ENCODE measurements at regions of chr1 and their contacts with region 1.

Region 1: GRCh38 chr1:89762779-89763648 is 57.8 kb upstream of the LRRC8D start:
- DNase-seq: peak; percentile 95
- H3K4me3 ChIP-seq: peak overlapping the region; percentile 5 to 34 (median 33)
- H3K27ac ChIP-seq: peak overlapping the region; percentile 52
- H3K4me1 ChIP-seq: peaks cover 46% of the 10 kb centered on the region
- H3K27me3 ChIP-seq: no peaks in the 10 kb centered on the region
- CTCF ChIP-seq: peak; percentile 98
- POLR2A ChIP-seq: peak; percentile 58

Region 2: GRCh38 chr1:89407360-89407759 is 355.7 kb before region 1 on chr1:
- CTCF ChIA-PET with region 1: no interaction called
- POLR2A ChIA-PET with region 1: no interaction called
- dilution Hi-C with region 1: no loop called
- intact Hi-C with region 1: no loop called
- DNase-seq: no peak
- H3K4me3 ChIP-seq: no peak overlapping the region
- H3K27ac ChIP-seq: no peak overlapping the region
- H3K4me1 ChIP-seq: no peaks in the 10 kb centered on the region
- H3K27me3 ChIP-seq: no peaks in the 10 kb centered on the region
- CTCF ChIP-seq: no peak
- POLR2A ChIP-seq: no peak

Region 3: DNA sequence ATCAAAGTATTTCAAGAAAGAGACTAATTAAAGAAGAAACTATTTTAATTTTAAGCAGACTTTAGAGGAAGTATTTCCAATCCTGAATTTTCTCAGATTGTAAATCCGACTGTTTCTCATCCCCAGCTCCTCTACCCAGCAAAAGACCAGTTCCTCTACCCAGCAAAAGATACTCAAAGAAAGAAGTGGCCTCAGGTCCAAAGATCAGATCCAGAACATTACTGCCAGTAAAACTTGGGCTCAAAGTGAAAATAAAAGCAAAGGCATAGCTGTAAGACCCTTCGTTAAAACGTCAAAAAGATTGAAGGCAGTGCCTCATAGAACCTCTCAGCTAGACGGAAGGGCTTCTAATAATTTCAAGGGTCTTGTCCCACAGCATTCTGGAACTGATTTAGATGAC is 188.4 kb before region 1 on chr1:
- CTCF ChIA-PET with region 1: no interaction called
- POLR2A ChIA-PET with region 1: no interaction called
- dilution Hi-C with region 1: no loop called
- intact Hi-C with region 1: no loop called
- DNase-seq: no peak
- H3K4me3 ChIP-seq: no peak overlapping the region
- H3K27ac ChIP-seq: no peak overlapping the region
- H3K4me1 ChIP-seq: no peaks in the 10 kb centered on the region
- H3K27me3 ChIP-seq: no peaks in the 10 kb centered on the region
- CTCF ChIP-seq: no peak
- POLR2A ChIP-seq: no peak

Region 4: DNA sequence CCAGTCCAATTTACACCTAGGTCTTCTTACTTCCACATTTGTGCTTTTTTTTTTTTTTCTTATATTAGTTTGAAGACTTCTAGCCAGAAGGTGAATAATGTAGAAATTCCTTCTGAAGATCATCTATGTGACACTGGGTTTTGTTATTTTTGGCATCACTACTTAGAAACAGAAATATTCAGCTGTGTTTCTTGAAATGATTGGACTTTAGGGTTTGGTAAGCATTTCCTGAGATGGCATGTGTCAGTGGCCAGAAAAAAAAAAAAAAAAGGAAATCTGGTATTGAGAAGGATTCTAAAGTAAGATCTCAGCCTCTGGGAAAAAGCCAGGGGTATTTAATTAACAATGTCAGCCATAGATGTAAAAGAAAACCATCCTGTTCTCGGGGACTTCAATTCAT is 173.5 kb before region 1 on chr1:
- CTCF ChIA-PET with region 1: interaction called, 10 read pairs
- POLR2A ChIA-PET with region 1: no interaction called
- dilution Hi-C with region 1: no loop called
- intact Hi-C with region 1: no loop called
- DNase-seq: peak; percentile 48
- H3K4me3 ChIP-seq: no peak overlapping the region
- H3K27ac ChIP-seq: no peak overlapping the region
- H3K4me1 ChIP-seq: peaks cover 8% of the 10 kb centered on the region
- H3K27me3 ChIP-seq: no peaks in the 10 kb centered on the region
- CTCF ChIP-seq: no peak
- POLR2A ChIP-seq: no peak

Region 5: DNA sequence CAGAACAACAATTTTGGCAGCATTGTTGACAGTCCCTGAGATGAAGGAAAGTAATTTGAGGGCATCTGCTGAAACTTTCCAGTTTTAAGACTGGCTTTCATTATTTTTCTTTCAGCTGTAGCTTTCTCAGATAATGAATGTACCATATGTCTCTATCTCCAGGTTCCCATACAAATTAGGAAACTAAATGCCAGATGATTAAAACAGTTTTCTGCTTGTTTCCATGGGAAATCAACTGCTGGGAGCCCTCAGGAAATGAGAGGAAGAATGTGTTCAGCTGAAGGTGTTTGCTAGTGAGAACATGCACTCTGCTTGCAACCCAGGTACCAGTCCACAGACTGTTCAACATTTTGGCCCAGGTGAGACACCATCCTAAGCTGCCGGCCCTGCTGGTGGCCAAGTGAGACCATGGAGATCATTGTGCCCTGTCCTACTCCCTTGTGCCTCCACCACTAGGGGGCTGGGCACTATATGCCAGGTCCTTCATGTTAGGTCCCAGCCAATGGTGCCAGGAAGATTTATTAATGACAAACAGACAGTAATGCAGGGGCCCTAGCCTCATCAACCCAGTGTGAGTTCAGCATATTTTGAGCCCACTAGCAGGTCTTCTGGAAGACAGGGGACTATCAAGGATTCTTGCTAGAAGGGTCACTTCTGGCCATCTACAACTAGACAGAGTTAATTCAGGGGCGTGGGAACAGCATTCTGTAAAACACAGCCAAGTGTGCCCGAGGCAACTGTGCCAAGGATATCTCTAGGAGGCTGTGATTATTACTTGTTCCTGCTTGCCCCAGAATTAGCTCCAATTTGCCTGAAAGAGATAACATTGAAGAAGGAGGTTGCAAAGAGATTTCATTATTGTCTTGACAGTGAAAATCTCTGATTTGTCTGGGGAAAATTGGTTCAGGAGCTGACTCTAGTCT is 147.1 kb before region 1 on chr1:
- CTCF ChIA-PET with region 1: interaction called, 25 read pairs
- POLR2A ChIA-PET with region 1: interaction called, 4 read pairs
- dilution Hi-C with region 1: no loop called
- intact Hi-C with region 1: no loop called
- DNase-seq: peak; percentile 25
- H3K4me3 ChIP-seq: no peak overlapping the region
- H3K27ac ChIP-seq: no peak overlapping the region
- H3K4me1 ChIP-seq: no peaks in the 10 kb centered on the region
- H3K27me3 ChIP-seq: no peaks in the 10 kb centered on the region
- CTCF ChIP-seq: peak; percentile 36 to 61
- POLR2A ChIP-seq: no peak

Region 6: GRCh38 chr1:89670163-89670562 is 92.9 kb before region 1 on chr1:
- CTCF ChIA-PET with region 1: interaction called, 11 read pairs
- POLR2A ChIA-PET with region 1: no interaction called
- dilution Hi-C with region 1: no loop called
- intact Hi-C with region 1: no loop called
- DNase-seq: peak; percentile 27
- H3K4me3 ChIP-seq: no peak overlapping the region
- H3K27ac ChIP-seq: no peak overlapping the region
- H3K4me1 ChIP-seq: peaks cover 51% of the 10 kb centered on the region
- H3K27me3 ChIP-seq: no peaks in the 10 kb centered on the region
- CTCF ChIP-seq: no peak
- POLR2A ChIP-seq: no peak

Region 7: DNA sequence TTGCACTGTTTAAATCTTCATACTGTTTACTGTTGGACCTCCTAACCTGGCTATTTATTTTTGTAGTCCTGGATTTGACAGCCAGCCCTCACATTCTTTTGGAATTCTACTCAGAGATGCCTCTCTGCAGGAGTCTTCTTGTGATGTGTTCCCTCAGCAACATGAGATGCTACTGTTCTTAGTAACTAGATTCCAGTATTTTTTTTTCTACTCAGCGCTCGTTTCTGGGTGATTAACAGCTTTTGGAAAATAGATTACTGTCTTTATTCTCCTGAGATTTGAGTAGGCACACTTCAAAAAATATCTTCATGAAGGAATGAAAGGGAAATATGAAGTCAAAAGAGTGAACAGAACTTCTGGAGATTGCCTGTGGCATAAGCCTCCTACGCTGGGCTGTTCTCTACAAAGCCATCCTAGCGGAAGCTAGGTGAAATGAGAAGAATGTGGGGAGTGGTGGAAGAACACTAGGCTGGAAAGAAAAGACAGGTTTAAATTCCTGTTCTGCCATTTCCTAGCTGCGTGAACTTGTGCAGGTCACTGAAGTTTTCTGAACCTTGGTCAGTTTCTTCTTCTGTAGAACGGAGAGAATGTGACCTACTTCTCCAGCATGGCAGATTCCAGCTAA is 54.2 kb before region 1 on chr1:
- CTCF ChIA-PET with region 1: interaction called, 10 read pairs
- POLR2A ChIA-PET with region 1: no interaction called
- dilution Hi-C with region 1: no loop called
- intact Hi-C with region 1: loop called (anchors 1 kb)
- DNase-seq: no peak
- H3K4me3 ChIP-seq: no peak overlapping the region
- H3K27ac ChIP-seq: peak overlapping the region; percentile 97
- H3K4me1 ChIP-seq: peaks cover 43% of the 10 kb centered on the region
- H3K27me3 ChIP-seq: no peaks in the 10 kb centered on the region
- CTCF ChIP-seq: no peak
- POLR2A ChIP-seq: no peak

Region 8: GRCh38 chr1:89739844-89740216 is 23.2 kb before region 1 on chr1:
- CTCF ChIA-PET with region 1: interaction called, 10 read pairs
- POLR2A ChIA-PET with region 1: no interaction called
- dilution Hi-C with region 1: no loop called
- intact Hi-C with region 1: no loop called
- DNase-seq: no peak
- H3K4me3 ChIP-seq: no peak overlapping the region
- H3K27ac ChIP-seq: no peak overlapping the region
- H3K4me1 ChIP-seq: no peaks in the 10 kb centered on the region
- H3K27me3 ChIP-seq: no peaks in the 10 kb centered on the region
- CTCF ChIP-seq: no peak
- POLR2A ChIP-seq: no peak

Region 9: GRCh38 chr1:89894210-89895201 is 131.5 kb after region 1 on chr1:
- CTCF ChIA-PET with region 1: no interaction called
- POLR2A ChIA-PET with region 1: no interaction called
- dilution Hi-C with region 1: no loop called
- intact Hi-C with region 1: no loop called
- DNase-seq: peak; percentile 86
- H3K4me3 ChIP-seq: peak overlapping the region in 1 of 3 experiments; percentile 1
- H3K27ac ChIP-seq: peak overlapping the region; percentile 73
- H3K4me1 ChIP-seq: peaks cover 59% of the 10 kb centered on the region
- H3K27me3 ChIP-seq: no peaks in the 10 kb centered on the region
- CTCF ChIP-seq: no peak
- POLR2A ChIP-seq: peak; percentile 37